ENCODE measurements at regions of chr14 and their contacts with region 1.

Region 1: DNA sequence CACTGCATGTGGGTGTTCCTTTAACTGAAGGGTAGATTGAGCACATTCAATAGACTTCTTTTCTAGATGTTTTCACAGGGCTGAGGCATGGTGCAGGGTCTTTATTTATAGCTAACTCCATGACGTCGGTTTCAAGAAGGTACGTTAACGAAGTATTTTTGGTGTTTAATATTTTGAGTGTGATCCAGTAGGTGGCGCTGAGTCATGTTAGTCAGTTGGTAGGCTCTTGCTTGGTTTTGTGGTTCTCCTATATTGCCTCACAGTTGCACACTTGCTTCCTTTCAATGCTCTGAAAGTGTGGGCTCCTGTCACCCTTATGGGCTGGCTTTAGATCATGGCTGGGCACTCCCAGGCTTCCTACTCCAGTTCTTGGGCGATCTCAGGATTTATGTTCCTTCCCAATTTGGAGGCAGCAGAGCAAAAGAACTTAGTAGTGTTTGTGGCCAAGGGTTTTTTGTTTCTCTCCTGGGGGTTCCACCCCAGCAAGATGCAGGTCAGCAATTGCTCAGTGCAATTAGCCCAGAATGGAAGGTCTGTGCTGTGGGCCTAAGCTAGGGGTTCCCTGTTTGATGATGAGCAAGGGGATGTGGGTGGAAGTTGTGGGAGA is 471.6 kb upstream of the FOXG1 start:
- DNase-seq: peak; percentile 75
- H3K4me3 Mint-ChIP-seq: no peak overlapping the region
- H3K27ac Mint-ChIP-seq: no peak overlapping the region
- H3K4me1 Mint-ChIP-seq: no peaks in the 10 kb centered on the region
- H3K27me3 Mint-ChIP-seq: no peaks in the 10 kb centered on the region
- CTCF ChIP-seq: peak; percentile 25

Region 2: DNA sequence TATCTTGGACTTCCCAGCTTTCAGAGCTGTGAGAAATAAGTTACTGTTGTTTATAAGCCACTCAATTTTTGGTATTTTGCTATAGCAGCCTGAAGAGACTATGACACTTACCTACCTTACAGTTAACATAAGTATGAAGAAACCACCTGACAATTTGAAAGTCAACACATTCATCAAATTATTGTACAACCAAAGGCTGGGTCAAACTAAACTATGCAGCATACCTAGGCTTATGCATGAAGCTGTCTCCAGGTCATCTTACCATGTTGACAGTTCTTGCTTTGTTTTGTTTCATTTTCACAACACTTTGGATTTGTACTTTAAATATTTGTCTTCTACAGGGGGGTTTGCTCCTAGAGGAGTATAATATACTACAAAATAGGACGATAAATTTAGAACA is 383.3 kb before region 1 on chr14:
- CTCF ChIA-PET with region 1: no interaction called
- POLR2A ChIA-PET with region 1: no interaction called
- intact Hi-C with region 1: no loop called
- DNase-seq: no peak
- H3K4me3 Mint-ChIP-seq: no peak overlapping the region
- H3K27ac Mint-ChIP-seq: no peak overlapping the region
- H3K4me1 Mint-ChIP-seq: no peaks in the 10 kb centered on the region
- H3K27me3 Mint-ChIP-seq: no peaks in the 10 kb centered on the region
- CTCF ChIP-seq: no peak

Region 3: DNA sequence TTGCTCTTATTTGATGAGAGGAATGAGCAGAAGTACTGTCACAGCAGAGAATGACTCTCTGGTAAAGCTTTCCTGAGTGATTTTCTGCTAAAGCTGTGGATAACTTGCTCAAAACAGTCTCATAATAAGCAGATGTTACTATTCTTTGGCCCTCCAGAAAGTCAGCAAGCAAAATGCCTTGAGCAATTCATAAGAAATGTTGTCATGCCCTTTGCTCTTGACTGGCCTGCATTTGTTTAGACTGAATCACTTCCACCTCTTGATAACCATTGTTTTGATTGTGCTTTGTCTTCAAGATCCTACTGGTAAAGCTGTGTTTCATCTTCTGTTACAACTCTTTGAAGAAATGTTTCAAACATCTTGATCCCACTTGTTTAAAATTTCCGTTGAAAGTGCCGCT is 13.8 kb after region 1 on chr14:
- CTCF ChIA-PET with region 1: interaction called, 19 read pairs
- POLR2A ChIA-PET with region 1: no interaction called
- intact Hi-C with region 1: no loop called
- DNase-seq: peak; percentile 77
- H3K4me3 Mint-ChIP-seq: no peak overlapping the region
- H3K27ac Mint-ChIP-seq: peak overlapping the region; percentile 69
- H3K4me1 Mint-ChIP-seq: peaks cover 15% of the 10 kb centered on the region
- H3K27me3 Mint-ChIP-seq: no peaks in the 10 kb centered on the region
- CTCF ChIP-seq: no peak

Region 4: DNA sequence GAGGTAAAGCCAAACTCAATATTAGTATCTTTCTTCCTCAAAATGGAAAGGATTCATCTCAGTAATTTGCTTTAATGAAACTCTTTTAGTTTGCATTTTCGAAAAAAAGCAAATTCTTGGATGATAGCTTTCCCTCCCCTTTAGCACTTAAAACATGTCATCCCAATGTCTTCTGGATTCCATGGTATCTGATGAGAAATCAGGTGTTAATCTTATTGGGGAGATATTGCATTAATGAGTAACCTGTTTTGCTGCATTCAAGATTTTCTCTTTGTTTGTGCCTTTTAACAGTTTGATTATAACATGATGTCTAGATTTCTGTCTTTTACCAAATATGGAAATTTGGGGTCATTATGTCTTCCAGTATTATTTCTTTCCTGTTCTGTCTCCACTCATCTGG is 66.5 kb after region 1 on chr14:
- CTCF ChIA-PET with region 1: no interaction called
- POLR2A ChIA-PET with region 1: no interaction called
- intact Hi-C with region 1: no loop called
- DNase-seq: peak; percentile 18
- H3K4me3 Mint-ChIP-seq: no peak overlapping the region
- H3K27ac Mint-ChIP-seq: no peak overlapping the region
- H3K4me1 Mint-ChIP-seq: no peaks in the 10 kb centered on the region
- H3K27me3 Mint-ChIP-seq: no peaks in the 10 kb centered on the region
- CTCF ChIP-seq: no peak

Region 5: DNA sequence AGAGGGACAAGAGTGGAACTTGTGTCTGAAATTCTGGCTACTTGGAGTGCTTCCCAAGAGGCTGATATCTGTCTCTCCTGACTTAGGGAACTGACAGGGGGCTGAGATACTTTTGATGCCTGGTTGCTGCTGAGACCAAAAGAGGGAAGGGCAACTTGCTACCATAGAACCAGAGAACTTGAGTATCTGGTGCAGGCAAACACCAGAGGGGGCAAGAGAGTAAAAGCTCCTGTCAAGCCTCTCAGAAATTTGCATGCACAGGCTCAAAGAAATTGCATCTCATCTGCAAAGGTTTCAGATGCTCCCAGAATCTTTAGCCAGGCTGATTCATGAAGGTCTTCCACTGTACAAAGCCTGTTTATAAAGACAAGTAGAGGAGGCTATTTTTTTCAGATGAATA is 80.4 kb after region 1 on chr14:
- CTCF ChIA-PET with region 1: interaction called, 19 read pairs
- POLR2A ChIA-PET with region 1: no interaction called
- intact Hi-C with region 1: no loop called
- DNase-seq: peak; percentile 64
- H3K4me3 Mint-ChIP-seq: no peak overlapping the region
- H3K27ac Mint-ChIP-seq: peak overlapping the region; percentile 31
- H3K4me1 Mint-ChIP-seq: peaks cover 11% of the 10 kb centered on the region
- H3K27me3 Mint-ChIP-seq: no peaks in the 10 kb centered on the region
- CTCF ChIP-seq: peak; percentile 35

Region 6: GRCh38 chr14:28596391-28596790 is 301.5 kb after region 1 on chr14:
- CTCF ChIA-PET with region 1: interaction called, 12 read pairs
- POLR2A ChIA-PET with region 1: no interaction called
- intact Hi-C with region 1: no loop called
- DNase-seq: peak; percentile 77
- H3K4me3 Mint-ChIP-seq: no peak overlapping the region
- H3K27ac Mint-ChIP-seq: no peak overlapping the region
- H3K4me1 Mint-ChIP-seq: peaks cover 22% of the 10 kb centered on the region
- H3K27me3 Mint-ChIP-seq: no peaks in the 10 kb centered on the region
- CTCF ChIP-seq: peak; percentile 31

Region 7: GRCh38 chr14:28603606-28604005 is 308.7 kb after region 1 on chr14:
- CTCF ChIA-PET with region 1: interaction called, 15 read pairs
- POLR2A ChIA-PET with region 1: no interaction called
- intact Hi-C with region 1: no loop called
- DNase-seq: peak; percentile 54
- H3K4me3 Mint-ChIP-seq: peak overlapping the region; percentile 50
- H3K27ac Mint-ChIP-seq: peak overlapping the region; percentile 61
- H3K4me1 Mint-ChIP-seq: peaks cover 25% of the 10 kb centered on the region
- H3K27me3 Mint-ChIP-seq: no peaks in the 10 kb centered on the region
- CTCF ChIP-seq: no peak

Measured in MCF 10A (cell line).